Caco-2 (cell line): ENCODE measurements at regions of chr3 and their contacts with region 1.

Region 1: GRCh38 chr3:71652781-71653413 is 69.4 kb upstream of the FOXP1 start:
- DNase-seq: peak; percentile 49 to 55
- H3K4me3 ChIP-seq: no peak overlapping the region
- H3K4me3 Mint-ChIP-seq: no peak overlapping the region
- H3K27ac Mint-ChIP-seq: peak overlapping the region; percentile 39
- H3K4me1 ChIP-seq: peaks cover 11% of the 10 kb centered on the region
- H3K4me1 Mint-ChIP-seq: peaks cover 16% of the 10 kb centered on the region
- H3K27me3 ChIP-seq: no peaks in the 10 kb centered on the region
- H3K27me3 Mint-ChIP-seq: peaks cover 2% of the 10 kb centered on the region
- CTCF ChIP-seq: peak; percentile 52 to 54

Region 2: GRCh38 chr3:70531063-70531657 is 1121.7 kb before region 1 on chr3:
- CTCF ChIA-PET with region 1: no interaction called
- POLR2A ChIA-PET with region 1: no interaction called
- intact Hi-C with region 1: loop called (anchors 1 kb)
- DNase-seq: peak in 1 of 2 experiments; percentile 4
- H3K4me3 ChIP-seq: no peak overlapping the region
- H3K4me3 Mint-ChIP-seq: no peak overlapping the region
- H3K27ac Mint-ChIP-seq: no peak overlapping the region
- H3K4me1 ChIP-seq: no peaks in the 10 kb centered on the region
- H3K4me1 Mint-ChIP-seq: no peaks in the 10 kb centered on the region
- H3K27me3 ChIP-seq: no peaks in the 10 kb centered on the region
- H3K27me3 Mint-ChIP-seq: peaks cover 17% of the 10 kb centered on the region
- CTCF ChIP-seq: peak; percentile 38 to 46

Region 3: DNA sequence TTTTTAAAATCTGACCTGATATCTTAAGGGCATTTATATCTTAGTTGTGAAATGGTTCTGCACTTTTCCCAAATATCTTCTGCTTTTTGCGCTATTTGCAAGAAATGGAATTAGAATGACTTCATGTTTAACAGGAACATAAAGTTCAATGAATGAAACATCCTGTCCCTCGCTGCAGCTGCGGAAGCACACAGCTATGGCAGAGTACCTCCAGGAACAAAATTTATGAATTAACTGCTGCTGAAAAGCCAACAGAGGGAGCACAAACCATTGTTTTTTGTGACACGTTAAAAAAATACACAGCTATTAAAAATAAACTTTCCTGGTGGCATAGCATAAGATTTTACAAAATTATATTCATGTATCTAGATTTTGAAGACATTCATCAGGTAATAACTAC is 936.1 kb before region 1 on chr3:
- CTCF ChIA-PET with region 1: interaction called, 4 read pairs
- POLR2A ChIA-PET with region 1: no interaction called
- intact Hi-C with region 1: loop called (anchors 5 kb)
- DNase-seq: no peak
- H3K4me3 ChIP-seq: no peak overlapping the region
- H3K4me3 Mint-ChIP-seq: no peak overlapping the region
- H3K27ac Mint-ChIP-seq: no peak overlapping the region
- H3K4me1 ChIP-seq: no peaks in the 10 kb centered on the region
- H3K4me1 Mint-ChIP-seq: no peaks in the 10 kb centered on the region
- H3K27me3 ChIP-seq: no peaks in the 10 kb centered on the region
- H3K27me3 Mint-ChIP-seq: peaks cover 9% of the 10 kb centered on the region
- CTCF ChIP-seq: no peak

Region 4: GRCh38 chr3:71305231-71306206 is 347.4 kb before region 1 on chr3:
- CTCF ChIA-PET with region 1: interaction called, 4 read pairs
- POLR2A ChIA-PET with region 1: no interaction called
- intact Hi-C with region 1: loop called (anchors 5 kb)
- DNase-seq: peak; percentile 36 to 41
- H3K4me3 ChIP-seq: peak overlapping the region; percentile 47
- H3K4me3 Mint-ChIP-seq: peak overlapping the region; percentile 93
- H3K27ac Mint-ChIP-seq: peak overlapping the region; percentile 91
- H3K4me1 ChIP-seq: peaks cover 26% of the 10 kb centered on the region
- H3K4me1 Mint-ChIP-seq: peaks cover 36% of the 10 kb centered on the region
- H3K27me3 ChIP-seq: no peaks in the 10 kb centered on the region
- H3K27me3 Mint-ChIP-seq: no peaks in the 10 kb centered on the region
- CTCF ChIP-seq: no peak

Region 5: DNA sequence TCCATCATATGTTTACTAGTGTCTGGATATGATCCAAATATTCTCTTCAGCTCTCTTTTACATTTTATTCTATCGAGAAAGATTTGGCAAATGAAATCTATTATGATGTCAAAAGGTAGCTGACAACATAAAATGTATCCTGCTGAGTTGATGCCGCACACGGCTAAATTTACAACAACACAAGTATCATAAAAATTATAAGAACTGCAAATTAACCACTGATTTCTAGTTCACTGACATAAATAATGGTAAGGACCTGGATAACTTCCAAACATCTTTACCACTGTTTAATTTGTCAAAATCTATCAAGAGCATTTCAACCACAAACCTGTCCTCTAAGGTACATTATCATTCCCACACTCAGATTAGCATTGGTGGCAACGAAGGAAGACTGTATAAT is 313.8 kb before region 1 on chr3:
- CTCF ChIA-PET with region 1: no interaction called
- POLR2A ChIA-PET with region 1: no interaction called
- intact Hi-C with region 1: no loop called
- DNase-seq: no peak
- H3K4me3 ChIP-seq: no peak overlapping the region
- H3K4me3 Mint-ChIP-seq: no peak overlapping the region
- H3K27ac Mint-ChIP-seq: no peak overlapping the region
- H3K4me1 ChIP-seq: no peaks in the 10 kb centered on the region
- H3K4me1 Mint-ChIP-seq: peaks cover 7% of the 10 kb centered on the region
- H3K27me3 ChIP-seq: no peaks in the 10 kb centered on the region
- H3K27me3 Mint-ChIP-seq: no peaks in the 10 kb centered on the region
- CTCF ChIP-seq: no peak